ENCODE measurements at regions of chr1 and their contacts with region 1.

Region 1: DNA sequence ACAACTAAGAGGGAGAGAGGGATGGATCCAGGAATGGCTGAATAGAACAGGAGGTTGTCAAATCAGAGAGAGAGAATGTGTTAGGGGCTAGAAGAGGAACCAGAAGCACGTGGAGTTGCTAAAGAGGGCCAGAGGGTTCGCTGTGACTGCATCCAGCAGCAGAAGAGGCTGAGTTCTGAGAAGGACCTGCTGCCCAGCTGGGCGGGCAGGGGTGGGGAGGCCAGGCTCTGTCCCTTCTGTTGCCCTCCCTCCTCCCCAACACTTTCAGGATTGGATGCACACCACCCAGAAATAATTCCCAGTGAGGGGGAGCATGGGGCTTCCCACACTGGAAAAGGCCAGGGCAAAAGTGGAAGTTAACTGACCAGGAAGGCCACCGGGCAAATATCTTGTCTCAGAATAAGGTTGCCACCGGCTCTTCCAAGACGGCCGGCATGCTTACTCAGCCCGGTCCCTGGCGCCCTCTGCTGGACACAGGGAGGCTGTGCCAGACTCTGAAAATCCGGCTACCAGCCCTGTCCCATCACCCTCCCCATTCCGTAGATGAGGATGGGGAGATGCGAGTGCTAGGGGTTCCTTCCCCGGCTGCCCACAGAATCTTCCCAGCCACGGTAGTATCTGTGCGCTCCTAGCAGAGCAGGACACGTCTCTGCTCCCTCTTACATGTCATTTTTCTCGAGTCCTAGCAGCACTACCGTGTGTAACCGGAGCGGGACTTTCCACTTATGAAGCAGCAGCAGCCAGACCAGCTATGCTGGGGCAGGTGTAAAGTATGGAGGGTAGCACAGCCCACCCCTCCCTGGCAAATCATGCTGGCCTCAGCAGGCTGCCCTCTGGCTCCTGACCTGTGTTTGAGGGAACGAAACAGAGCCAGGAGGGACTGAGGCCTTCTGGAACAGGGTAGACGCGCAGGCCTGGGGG is 46.8 kb upstream of the A3GALT2 start:
- DNase-seq: peak; percentile 74
- ATAC-seq: peak; percentile 99
- H3K4me3 Mint-ChIP-seq: no peak overlapping the region
- H3K27ac Mint-ChIP-seq: no peak overlapping the region
- H3K4me1 Mint-ChIP-seq: no peaks in the 10 kb centered on the region
- H3K27me3 Mint-ChIP-seq: peaks cover 8% of the 10 kb centered on the region
- CTCF ChIP-seq: peak; percentile 48

Region 2: GRCh38 chr1:33094971-33095604 is 272.7 kb before region 1 on chr1:
- CTCF ChIA-PET with region 1: interaction called, 3 read pairs
- POLR2A ChIA-PET with region 1: no interaction called
- intact Hi-C with region 1: loop called (anchors 2 kb)
- DNase-seq: no peak
- ATAC-seq: no peak
- H3K4me3 Mint-ChIP-seq: no peak overlapping the region
- H3K27ac Mint-ChIP-seq: no peak overlapping the region
- H3K4me1 Mint-ChIP-seq: peaks cover 6% of the 10 kb centered on the region
- H3K27me3 Mint-ChIP-seq: peaks cover 2% of the 10 kb centered on the region
- CTCF ChIP-seq: peak; percentile 79

Region 3: GRCh38 chr1:33455539-33456501 is 88.1 kb after region 1 on chr1:
- CTCF ChIA-PET with region 1: no interaction called
- POLR2A ChIA-PET with region 1: interaction called, 4 read pairs
- intact Hi-C with region 1: loop called (anchors 5 kb)
- DNase-seq: no peak
- ATAC-seq: peak; percentile 88
- H3K4me3 Mint-ChIP-seq: no peak overlapping the region
- H3K27ac Mint-ChIP-seq: no peak overlapping the region
- H3K4me1 Mint-ChIP-seq: peaks cover 27% of the 10 kb centered on the region
- H3K27me3 Mint-ChIP-seq: no peaks in the 10 kb centered on the region
- CTCF ChIP-seq: no peak

Region 4: DNA sequence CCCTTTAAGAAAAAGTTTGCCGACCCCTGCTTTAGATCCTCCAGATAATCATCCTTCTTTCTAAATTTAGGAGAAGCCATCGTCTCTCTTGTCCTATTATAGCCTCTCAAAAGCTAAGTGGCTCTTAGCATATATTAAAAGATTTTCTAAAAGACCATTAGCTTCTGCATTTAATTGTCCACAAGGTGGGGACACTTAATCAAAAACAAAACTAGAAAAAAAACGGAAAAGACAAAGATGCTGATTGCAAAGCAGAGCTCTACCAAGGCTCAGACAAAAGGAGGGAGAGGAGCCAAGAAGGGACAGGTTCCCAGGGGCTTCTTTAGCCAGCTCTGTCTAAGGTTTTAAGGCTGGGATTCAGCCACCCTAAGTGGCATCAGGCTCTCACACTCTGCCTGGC is 367.9 kb after region 1 on chr1:
- CTCF ChIA-PET with region 1: no interaction called
- POLR2A ChIA-PET with region 1: no interaction called
- intact Hi-C with region 1: no loop called
- DNase-seq: no peak
- ATAC-seq: no peak
- H3K4me3 Mint-ChIP-seq: no peak overlapping the region
- H3K27ac Mint-ChIP-seq: no peak overlapping the region
- H3K4me1 Mint-ChIP-seq: no peaks in the 10 kb centered on the region
- H3K27me3 Mint-ChIP-seq: peaks cover 8% of the 10 kb centered on the region
- CTCF ChIP-seq: no peak

Measured in activated B cell treated with CpG ODN at 0.5 μM for 24 hours (primary cell).